Activated B cell treated with CpG ODN at 0.5 μM for 24 hours (primary cell): ENCODE measurements at regions of chr1 and their contacts with region 1.

Region 1: DNA sequence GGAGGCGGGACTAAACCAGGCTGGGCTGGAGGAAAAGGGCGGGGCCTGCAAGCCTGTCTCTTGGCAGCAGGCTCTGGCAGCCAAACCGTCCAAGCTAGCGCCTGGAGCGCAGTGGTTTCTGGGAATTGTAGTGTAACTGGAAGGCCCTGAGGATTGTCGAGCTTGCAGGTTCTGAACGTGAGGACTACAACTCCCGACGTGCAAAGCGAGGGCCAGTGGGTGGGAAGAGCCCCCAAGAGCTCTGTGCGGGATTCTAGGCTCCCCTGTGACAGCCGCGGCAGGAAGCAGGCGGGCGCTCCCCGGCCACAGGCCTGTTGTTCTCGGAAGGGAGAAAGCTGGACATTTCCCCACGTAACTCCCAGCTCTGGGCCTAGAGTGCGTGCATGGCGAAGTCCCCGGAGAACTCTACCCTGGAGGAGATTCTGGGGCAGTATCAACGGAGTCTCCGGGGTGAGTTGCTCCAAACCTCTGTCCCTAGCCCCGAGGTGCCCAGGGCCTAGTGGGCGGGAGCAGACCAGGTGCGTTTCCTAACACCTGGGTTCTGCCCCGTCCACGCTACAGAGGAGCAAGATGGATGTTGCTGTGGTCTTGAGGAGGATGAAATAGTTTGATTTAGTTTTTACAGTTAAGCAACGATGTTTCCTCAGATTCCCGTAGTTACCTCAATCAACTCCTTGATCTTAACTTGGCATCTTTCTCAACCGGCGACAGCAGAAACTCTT is at the start of gene SDCCAG8:
- DNase-seq: peak; percentile 83
- ATAC-seq: peak; percentile 80
- H3K4me3 Mint-ChIP-seq: peak within 1 kb of the TSS; percentile 95
- H3K27ac Mint-ChIP-seq: peak within 1 kb of the TSS; percentile 98
- H3K4me1 Mint-ChIP-seq: peaks cover 41% of the 10 kb centered on the region
- H3K27me3 Mint-ChIP-seq: no peaks in the 10 kb centered on the region
- CTCF ChIP-seq: no peak
- total RNA-seq, gene SDCCAG8: 33.4 and 41.2 TPM in 2 replicates

Region 2: DNA sequence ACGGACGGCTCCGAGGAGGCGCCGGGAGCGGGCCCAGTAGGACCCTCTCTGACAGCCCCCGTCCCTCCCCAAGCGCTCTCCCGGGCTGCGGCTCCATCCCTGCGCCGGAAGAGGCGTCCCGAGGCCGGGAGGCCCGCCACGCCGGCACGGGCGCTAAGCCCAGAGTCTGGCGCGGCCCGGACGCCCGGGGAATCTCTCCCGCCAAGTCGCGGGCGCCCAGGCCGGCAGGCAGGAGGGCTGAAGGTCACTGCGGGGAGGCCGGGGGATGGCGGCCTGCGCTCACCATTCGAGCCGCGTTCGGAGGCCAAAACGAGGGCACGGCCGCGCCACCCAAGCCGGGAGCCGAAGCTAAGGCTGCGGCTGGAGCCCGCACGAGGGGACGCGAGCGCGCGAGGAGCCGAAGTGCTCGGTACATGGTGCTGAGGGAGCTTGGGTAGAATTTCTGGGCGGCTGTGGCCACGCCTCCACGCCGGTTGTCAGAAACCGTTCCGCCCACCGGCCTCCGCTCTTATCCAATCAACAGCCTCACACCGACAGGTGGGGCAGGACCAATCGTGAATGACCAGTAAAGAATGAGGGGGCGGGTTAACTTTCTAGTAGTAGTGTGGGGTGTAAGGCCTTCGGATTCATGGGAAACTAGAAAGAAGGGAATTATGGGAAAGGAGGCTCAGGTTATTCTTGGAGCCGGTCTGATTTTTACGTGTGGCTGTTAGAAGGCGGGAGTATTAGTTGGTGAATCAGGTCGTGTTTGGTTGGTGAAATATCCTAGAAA is 1736.5 kb before region 1 on chr1 and contains the start of gene FH:
- CTCF ChIA-PET with region 1: no interaction called
- POLR2A ChIA-PET with region 1: no interaction called
- intact Hi-C with region 1: loop called (anchors 1 kb)
- DNase-seq: peak; percentile 87
- ATAC-seq: peak; percentile 98
- H3K4me3 Mint-ChIP-seq: peak within 1 kb of the TSS; percentile 91
- H3K27ac Mint-ChIP-seq: peak within 1 kb of the TSS; percentile 72
- H3K4me1 Mint-ChIP-seq: peaks cover 21% of the 10 kb centered on the region
- H3K27me3 Mint-ChIP-seq: no peaks in the 10 kb centered on the region
- CTCF ChIP-seq: no peak
- total RNA-seq, gene FH: 56.0 and 58.3 TPM in 2 replicates

Region 3: DNA sequence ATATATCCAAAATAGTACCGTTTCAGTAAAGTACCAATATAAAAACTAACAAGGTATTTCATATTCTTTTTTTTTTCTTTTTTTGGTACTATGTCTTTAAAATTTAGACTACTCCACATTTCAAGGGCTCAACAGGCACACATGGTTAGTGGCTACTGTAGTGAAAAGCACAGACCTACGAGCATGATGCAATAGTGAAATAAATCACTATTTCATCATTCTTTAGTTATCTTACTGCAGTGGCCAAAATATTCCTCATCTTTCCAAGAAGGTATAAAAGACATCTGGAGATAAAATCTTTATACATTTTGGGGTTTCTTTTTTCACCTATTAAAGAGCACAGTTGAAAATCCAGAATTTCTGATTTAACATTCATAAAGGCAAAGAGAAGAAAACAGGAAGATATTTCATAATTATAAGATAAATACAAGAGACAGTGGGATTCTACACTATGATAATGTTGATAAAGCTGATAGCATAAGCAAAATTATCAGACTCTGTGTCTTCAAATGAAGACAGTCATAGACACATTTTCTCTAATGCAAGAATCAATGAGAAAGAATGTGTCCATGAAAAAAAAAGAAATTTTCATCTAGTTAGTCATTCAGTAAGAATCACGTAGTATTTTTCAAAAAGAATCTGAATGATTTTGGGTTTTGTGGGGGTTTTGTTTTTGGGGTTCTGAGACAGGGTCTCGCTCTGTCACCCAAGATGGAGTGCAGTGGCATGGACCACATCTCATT is 42.7 kb before region 1 on chr1:
- CTCF ChIA-PET with region 1: no interaction called
- POLR2A ChIA-PET with region 1: no interaction called
- intact Hi-C with region 1: no loop called
- DNase-seq: no peak
- ATAC-seq: no peak
- H3K4me3 Mint-ChIP-seq: no peak overlapping the region
- H3K27ac Mint-ChIP-seq: no peak overlapping the region
- H3K4me1 Mint-ChIP-seq: peaks cover 8% of the 10 kb centered on the region
- H3K27me3 Mint-ChIP-seq: no peaks in the 10 kb centered on the region
- CTCF ChIP-seq: no peak

Region 4: GRCh38 chr1:243236604-243237252 is 19.2 kb before region 1 on chr1:
- CTCF ChIA-PET with region 1: no interaction called
- POLR2A ChIA-PET with region 1: interaction called, 7 read pairs
- intact Hi-C with region 1: loop called (anchors 2 kb)
- DNase-seq: no peak
- ATAC-seq: peak; percentile 14
- H3K4me3 Mint-ChIP-seq: peak overlapping the region; percentile 35
- H3K27ac Mint-ChIP-seq: peak overlapping the region; percentile 80
- H3K4me1 Mint-ChIP-seq: peaks cover 30% of the 10 kb centered on the region
- H3K27me3 Mint-ChIP-seq: no peaks in the 10 kb centered on the region
- CTCF ChIP-seq: no peak

Region 5: GRCh38 chr1:243287652-243288051 is 31.7 kb after region 1 on chr1:
- CTCF ChIA-PET with region 1: interaction called, 3 read pairs
- POLR2A ChIA-PET with region 1: interaction called, 66 read pairs
- intact Hi-C with region 1: loop called (anchors 1 kb)
- DNase-seq: no peak
- ATAC-seq: peak; percentile 87
- H3K4me3 Mint-ChIP-seq: peak overlapping the region; percentile 53
- H3K27ac Mint-ChIP-seq: peak overlapping the region; percentile 89
- H3K4me1 Mint-ChIP-seq: peaks cover 58% of the 10 kb centered on the region
- H3K27me3 Mint-ChIP-seq: no peaks in the 10 kb centered on the region
- CTCF ChIP-seq: no peak

Region 6: GRCh38 chr1:243850452-243851256 is 594.7 kb after region 1 on chr1:
- CTCF ChIA-PET with region 1: no interaction called
- POLR2A ChIA-PET with region 1: no interaction called
- intact Hi-C with region 1: loop called (anchors 2 kb)
- DNase-seq: peak; percentile 76
- ATAC-seq: peak; percentile 47
- H3K4me3 Mint-ChIP-seq: peak overlapping the region; percentile 93
- H3K27ac Mint-ChIP-seq: peak overlapping the region; percentile 90
- H3K4me1 Mint-ChIP-seq: peaks cover 33% of the 10 kb centered on the region
- H3K27me3 Mint-ChIP-seq: peaks cover 2% of the 10 kb centered on the region
- CTCF ChIP-seq: no peak

Region 7: DNA sequence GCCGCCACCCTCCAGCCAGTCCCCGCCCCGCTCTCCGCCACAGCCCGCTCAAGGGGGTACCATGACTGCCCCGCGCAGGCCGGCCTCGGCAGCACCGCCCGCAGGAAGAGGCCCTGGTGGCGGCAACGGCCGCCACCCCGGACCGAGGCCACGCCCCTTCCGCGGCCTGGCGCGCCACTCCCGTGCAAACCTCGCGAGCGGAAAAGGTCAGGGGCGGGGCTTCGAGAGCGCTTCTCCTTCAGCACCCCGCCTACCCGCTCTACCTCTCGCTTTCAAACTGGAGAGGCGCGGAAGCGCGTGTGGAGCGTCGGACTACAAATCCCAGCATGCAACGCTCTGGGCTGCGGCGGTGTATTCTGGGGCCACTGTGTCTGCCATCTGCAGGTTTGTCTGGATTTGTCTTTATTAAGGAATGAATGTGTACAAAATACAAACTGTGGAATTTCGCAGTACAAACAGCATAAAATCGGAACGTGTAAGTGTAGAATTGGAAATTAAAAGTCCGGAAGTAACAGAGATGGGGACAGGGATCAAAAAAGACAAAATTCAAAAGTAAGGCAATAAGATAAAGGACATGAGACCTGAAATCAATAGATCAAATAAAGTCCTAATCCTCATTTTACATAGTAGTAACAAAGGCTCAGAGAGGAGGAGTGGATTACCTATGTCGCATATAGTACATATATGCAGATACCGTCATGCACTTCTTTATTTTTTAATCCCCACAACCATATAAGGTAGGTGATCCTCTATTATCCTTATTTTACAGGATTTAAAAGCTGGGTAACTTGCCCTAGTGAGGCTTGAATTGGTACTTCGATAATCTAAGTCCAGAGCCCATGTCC is 1196.2 kb after region 1 on chr1:
- CTCF ChIA-PET with region 1: no interaction called
- POLR2A ChIA-PET with region 1: interaction called, 3 read pairs
- intact Hi-C with region 1: loop called (anchors 1 kb)
- DNase-seq: peak; percentile 97
- ATAC-seq: peak; percentile 94
- H3K4me3 Mint-ChIP-seq: peak overlapping the region; percentile 95
- H3K27ac Mint-ChIP-seq: peak overlapping the region; percentile 78
- H3K4me1 Mint-ChIP-seq: peaks cover 32% of the 10 kb centered on the region
- H3K27me3 Mint-ChIP-seq: no peaks in the 10 kb centered on the region
- CTCF ChIP-seq: no peak

Region 8: GRCh38 chr1:244945109-244945671 is 1689.2 kb after region 1 on chr1:
- CTCF ChIA-PET with region 1: no interaction called
- POLR2A ChIA-PET with region 1: no interaction called
- intact Hi-C with region 1: loop called (anchors 10 kb)
- DNase-seq: no peak
- ATAC-seq: peak; percentile 29
- H3K4me3 Mint-ChIP-seq: peak overlapping the region; percentile 55
- H3K27ac Mint-ChIP-seq: peak overlapping the region; percentile 82
- H3K4me1 Mint-ChIP-seq: peaks cover 35% of the 10 kb centered on the region
- H3K27me3 Mint-ChIP-seq: no peaks in the 10 kb centered on the region
- CTCF ChIP-seq: no peak